ENCODE measurements at regions of chr2 and their contacts with region 1.

Region 1: GRCh38 chr2:25714740-25715139 is 41.4 kb upstream of the DTNB start:
- DNase-seq: no peak
- H3K4me3 Mint-ChIP-seq: no peak overlapping the region
- H3K27ac Mint-ChIP-seq: no peak overlapping the region
- H3K4me1 Mint-ChIP-seq: peaks cover 16% of the 10 kb centered on the region
- H3K27me3 Mint-ChIP-seq: peaks cover 13% of the 10 kb centered on the region

Region 2: DNA sequence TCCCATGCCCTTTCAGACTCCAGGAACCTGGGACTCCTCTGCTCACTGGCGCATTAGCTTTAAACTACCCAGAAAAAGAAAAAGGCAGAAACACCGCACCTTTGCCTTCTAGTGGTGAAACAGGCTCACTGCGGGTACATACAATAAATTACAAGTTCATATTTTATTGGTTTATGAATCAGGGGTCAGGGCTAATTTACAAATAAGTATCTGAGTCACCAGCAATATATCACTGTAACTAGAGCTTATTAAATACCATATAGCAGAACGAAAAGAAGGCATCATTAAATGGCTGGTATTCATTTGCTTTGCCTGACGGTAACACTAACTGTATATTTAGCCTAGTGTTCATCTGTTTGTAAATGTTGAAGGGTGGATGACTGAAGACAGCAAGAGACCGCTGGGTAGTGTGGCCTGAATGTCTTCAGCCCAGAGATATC is 14.5 kb before region 1 on chr2:
- CTCF ChIA-PET with region 1: interaction called, 15 read pairs
- POLR2A ChIA-PET with region 1: no interaction called
- DNase-seq: peak; percentile 41
- H3K4me3 Mint-ChIP-seq: no peak overlapping the region
- H3K27ac Mint-ChIP-seq: no peak overlapping the region
- H3K4me1 Mint-ChIP-seq: peaks cover 2% of the 10 kb centered on the region
- H3K27me3 Mint-ChIP-seq: no peaks in the 10 kb centered on the region